BJ (cell line): ENCODE measurements at regions of chr14 and their contacts with region 1.

Region 1: GRCh38 chr14:99982537-99983250 is 82.5 kb upstream of the EVL start:
- DNase-seq: no peak
- H3K4me3 ChIP-seq: no peak overlapping the region
- H3K27me3 ChIP-seq: no peaks in the 10 kb centered on the region
- CTCF ChIP-seq: peak; percentile 84

Region 2: DNA sequence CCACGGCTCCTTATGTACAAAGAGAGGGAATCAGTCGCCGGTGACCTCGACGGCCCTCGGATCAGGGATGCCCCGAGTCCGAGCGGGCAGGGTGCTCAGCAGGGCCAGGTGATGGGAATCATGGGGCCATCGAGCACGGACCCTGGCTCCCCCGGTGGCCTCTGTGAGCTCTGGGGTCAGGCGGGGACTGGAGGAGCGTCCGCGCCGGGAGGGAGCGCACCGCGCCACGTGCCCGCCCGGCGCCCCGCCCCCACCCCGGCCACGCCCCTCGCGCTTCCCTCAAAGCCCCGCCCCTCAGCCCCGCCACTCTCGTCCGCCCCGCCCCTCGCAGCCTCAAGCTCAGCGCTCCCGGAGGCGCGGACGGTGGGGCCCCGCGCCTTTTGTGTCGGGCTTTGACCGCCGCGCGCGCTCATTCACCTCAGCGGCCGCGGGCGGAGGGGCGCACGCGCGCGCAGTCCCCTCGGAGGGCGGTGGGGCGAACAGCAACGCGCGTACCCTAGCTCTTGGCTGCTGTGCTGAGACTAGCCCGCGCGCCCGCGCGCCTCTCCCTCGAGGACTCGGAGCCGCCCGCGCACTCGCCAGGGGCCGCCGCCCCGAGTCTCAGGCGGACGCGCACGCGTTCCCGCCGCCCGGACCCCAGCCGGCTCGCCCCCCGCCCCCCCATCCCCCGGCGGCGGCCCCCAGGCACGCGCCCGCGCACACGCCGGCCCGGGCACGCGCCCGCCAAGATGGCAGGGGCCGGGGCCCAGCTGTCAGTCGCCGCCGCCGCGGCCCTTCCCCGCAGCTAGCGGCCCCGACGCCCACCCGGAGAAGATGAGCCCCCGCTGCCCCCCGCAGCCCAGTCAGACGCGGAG is 11.4 kb before region 1 on chr14:
- CTCF ChIA-PET with region 1: interaction called, 17 read pairs
- POLR2A ChIA-PET with region 1: no interaction called
- DNase-seq: no peak
- H3K4me3 ChIP-seq: peak overlapping the region; percentile 91
- H3K27me3 ChIP-seq: no peaks in the 10 kb centered on the region
- CTCF ChIP-seq: no peak

Region 3: DNA sequence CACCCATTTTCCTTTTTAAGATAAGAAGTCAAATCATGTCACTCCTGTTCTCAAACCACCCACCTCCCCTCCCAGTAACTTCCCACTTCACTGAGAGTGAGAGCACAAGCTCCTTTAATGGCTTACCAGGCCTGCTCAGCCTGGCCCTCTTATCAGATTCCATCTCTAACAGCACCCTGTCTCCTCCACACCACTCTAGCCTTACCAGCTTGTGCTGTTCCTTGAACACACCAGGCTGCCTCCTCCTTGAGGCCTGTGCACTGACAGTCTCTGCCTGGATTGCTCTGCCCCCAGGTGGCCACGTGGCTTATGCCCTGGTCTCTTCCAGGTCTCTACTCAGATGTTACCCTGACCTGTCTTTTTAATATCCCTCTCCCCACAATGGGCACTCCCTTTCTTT is 42.4 kb after region 1 on chr14:
- CTCF ChIA-PET with region 1: interaction called, 25 read pairs
- POLR2A ChIA-PET with region 1: no interaction called
- DNase-seq: no peak
- H3K4me3 ChIP-seq: no peak overlapping the region
- H3K27me3 ChIP-seq: no peaks in the 10 kb centered on the region
- CTCF ChIP-seq: peak; percentile 50

Region 4: GRCh38 chr14:100192672-100193416 is 210.2 kb after region 1 on chr14:
- CTCF ChIA-PET with region 1: interaction called, 43 read pairs
- POLR2A ChIA-PET with region 1: no interaction called
- DNase-seq: peak; percentile 66
- H3K4me3 ChIP-seq: peak overlapping the region; percentile 42
- H3K27me3 ChIP-seq: no peaks in the 10 kb centered on the region
- CTCF ChIP-seq: peak; percentile 94